Activated CD8-positive, alpha-beta T cell treated with anti-CD3 and anti-CD28 coated beads, Interleukin-2, amount 10 ng/mL, durations not matched to agents 7 days and 5 days (primary cell): ENCODE measurements at regions of chrX and their contacts with region 1.

Region 1: GRCh38 chrX:135543924-135544323 is 23.5 kb downstream of the INTS6L start:
- DNase-seq: peak; percentile 39
- ATAC-seq: peak; percentile 42
- H3K4me3 Mint-ChIP-seq: no peak overlapping the region
- H3K27ac Mint-ChIP-seq: no peak overlapping the region
- H3K4me1 Mint-ChIP-seq: peaks cover 25% of the 10 kb centered on the region
- H3K27me3 Mint-ChIP-seq: no peaks in the 10 kb centered on the region

Region 2: GRCh38 chrX:135437867-135438733 is 105.8 kb before region 1 on chrX:
- CTCF ChIA-PET with region 1: no interaction called
- POLR2A ChIA-PET with region 1: no interaction called
- DNase-seq: no peak
- ATAC-seq: no peak
- H3K4me3 Mint-ChIP-seq: no peak overlapping the region
- H3K27ac Mint-ChIP-seq: no peak overlapping the region
- H3K4me1 Mint-ChIP-seq: no peaks in the 10 kb centered on the region
- H3K27me3 Mint-ChIP-seq: peaks cover 9% of the 10 kb centered on the region

Region 3: GRCh38 chrX:135509885-135510284 is 34.0 kb before region 1 on chrX:
- CTCF ChIA-PET with region 1: no interaction called
- POLR2A ChIA-PET with region 1: no interaction called
- DNase-seq: no peak
- ATAC-seq: no peak
- H3K4me3 Mint-ChIP-seq: no peak overlapping the region
- H3K27ac Mint-ChIP-seq: no peak overlapping the region
- H3K4me1 Mint-ChIP-seq: no peaks in the 10 kb centered on the region
- H3K27me3 Mint-ChIP-seq: no peaks in the 10 kb centered on the region

Region 4: DNA sequence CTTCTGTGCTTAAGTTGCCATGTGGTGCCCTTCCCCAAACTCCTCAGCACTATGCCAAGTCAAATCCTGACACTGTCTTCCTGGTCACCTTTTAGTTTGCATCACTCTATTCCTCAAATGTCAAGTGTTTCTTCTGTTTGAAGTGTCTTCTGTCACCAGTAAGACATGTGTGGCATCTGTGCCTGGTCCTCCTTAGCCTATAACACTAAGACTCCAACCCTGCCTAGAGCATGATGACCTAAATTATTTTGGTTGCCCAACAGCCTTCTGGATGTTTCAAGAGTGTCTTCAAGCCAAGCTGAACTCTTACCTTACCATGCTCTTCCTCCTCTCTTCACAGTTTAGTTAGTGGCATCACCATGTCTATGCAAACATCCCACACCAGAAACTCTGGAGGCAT is 21.5 kb after region 1 on chrX:
- CTCF ChIA-PET with region 1: interaction called, 14 read pairs
- POLR2A ChIA-PET with region 1: no interaction called
- DNase-seq: no peak
- ATAC-seq: no peak
- H3K4me3 Mint-ChIP-seq: no peak overlapping the region
- H3K27ac Mint-ChIP-seq: no peak overlapping the region
- H3K4me1 Mint-ChIP-seq: no peaks in the 10 kb centered on the region
- H3K27me3 Mint-ChIP-seq: no peaks in the 10 kb centered on the region